Mammary epithelial cell (primary cell): ENCODE measurements at regions of chr6 and their contacts with region 1.

Region 1: GRCh38 chr6:83417880-83418663 is 12.8 kb downstream of the ME1 start:
- DNase-seq: peak; percentile 38
- H3K4me3 ChIP-seq: no peak overlapping the region
- H3K27ac ChIP-seq: no peak overlapping the region
- H3K4me1 ChIP-seq: no peaks in the 10 kb centered on the region
- H3K27me3 ChIP-seq: no peaks in the 10 kb centered on the region
- CTCF ChIP-seq: peak; percentile 51 to 76

Region 2: DNA sequence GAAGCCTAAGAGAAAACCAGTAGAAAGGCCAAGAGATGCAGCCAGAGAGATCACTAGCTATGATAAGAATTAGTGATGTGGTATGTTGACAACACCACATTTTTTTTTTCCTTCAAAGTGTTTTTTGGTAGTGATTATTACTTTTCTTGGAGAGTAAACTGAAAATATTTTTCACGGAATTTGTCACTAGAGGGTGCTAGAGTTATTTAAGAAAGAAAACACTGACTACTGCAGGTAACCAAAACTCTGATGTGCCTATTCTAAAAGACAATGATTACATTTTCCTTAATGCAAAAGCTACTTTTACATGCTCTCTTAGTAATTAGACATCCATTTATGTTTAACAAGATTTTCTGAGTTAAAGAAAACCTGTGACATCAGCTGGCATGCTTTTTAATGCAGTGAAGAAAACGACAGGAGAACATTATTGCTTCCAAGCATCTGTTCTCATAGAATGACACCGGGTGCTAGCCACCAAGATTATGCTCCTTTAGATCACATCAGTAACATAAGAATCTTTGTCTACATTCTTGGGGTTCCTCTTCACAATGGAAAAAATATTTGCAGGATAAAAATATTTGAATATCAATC is 196.1 kb before region 1 on chr6:
- CTCF ChIA-PET with region 1: no interaction called
- dilution Hi-C with region 1: no loop called
- in situ Hi-C with region 1: loop called in 1 of 2 experiments (anchors 25 kb)
- intact Hi-C with region 1: loop called (anchors 2 kb)
- DNase-seq: peak; percentile 25
- H3K4me3 ChIP-seq: no peak overlapping the region
- H3K27ac ChIP-seq: no peak overlapping the region
- H3K4me1 ChIP-seq: no peaks in the 10 kb centered on the region
- H3K27me3 ChIP-seq: no peaks in the 10 kb centered on the region
- CTCF ChIP-seq: peak; percentile 33 to 54

Region 3: DNA sequence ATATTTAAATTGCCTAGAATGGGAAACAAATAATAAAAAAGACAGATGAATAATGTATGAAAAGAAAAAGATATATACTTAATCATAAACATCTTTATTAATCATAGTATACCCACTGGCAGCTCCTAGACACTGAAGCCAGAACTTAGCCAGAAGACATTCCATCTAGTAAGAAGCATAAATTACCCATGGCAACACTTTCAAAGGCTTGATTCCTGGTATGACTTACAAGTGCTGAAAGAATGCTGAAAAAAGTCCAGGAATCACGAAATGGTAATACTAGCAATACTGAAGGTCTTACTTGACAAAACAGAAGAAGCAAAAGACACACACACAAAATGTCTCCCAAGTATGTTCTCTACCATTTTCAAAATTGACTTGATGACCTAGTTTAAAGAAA is 186.9 kb before region 1 on chr6:
- CTCF ChIA-PET with region 1: no interaction called
- dilution Hi-C with region 1: no loop called
- in situ Hi-C with region 1: loop called in 1 of 2 experiments (anchors 25 kb)
- intact Hi-C with region 1: no loop called
- DNase-seq: no peak
- H3K4me3 ChIP-seq: no peak overlapping the region
- H3K27ac ChIP-seq: no peak overlapping the region
- H3K4me1 ChIP-seq: no peaks in the 10 kb centered on the region
- H3K27me3 ChIP-seq: no peaks in the 10 kb centered on the region
- CTCF ChIP-seq: no peak

Region 4: DNA sequence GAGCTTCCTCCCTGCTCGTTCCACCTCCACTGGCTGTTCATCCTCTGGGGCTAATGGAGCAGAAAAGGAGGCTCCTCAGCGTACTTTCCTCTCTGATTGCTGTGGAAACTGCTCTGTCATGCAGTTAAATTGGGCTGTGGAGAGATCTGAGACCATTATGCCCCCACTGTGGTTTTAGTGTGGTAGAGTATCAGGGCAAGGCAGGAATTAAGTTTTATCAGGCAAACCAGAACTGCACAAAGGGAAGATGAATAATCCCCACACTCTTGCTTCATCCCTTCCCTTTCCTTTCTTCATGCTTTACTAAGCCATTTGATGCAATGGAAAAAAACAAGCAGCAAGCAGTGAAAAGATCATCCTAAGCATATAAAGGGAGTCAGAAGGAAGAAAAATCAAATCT is 24.7 kb after region 1 on chr6:
- CTCF ChIA-PET with region 1: interaction called, 13 read pairs
- dilution Hi-C with region 1: no loop called
- in situ Hi-C with region 1: no loop called
- intact Hi-C with region 1: no loop called
- DNase-seq: peak; percentile 29
- H3K4me3 ChIP-seq: no peak overlapping the region
- H3K27ac ChIP-seq: no peak overlapping the region
- H3K4me1 ChIP-seq: no peaks in the 10 kb centered on the region
- H3K27me3 ChIP-seq: no peaks in the 10 kb centered on the region
- CTCF ChIP-seq: no peak